ENCODE measurements at regions of chr22 and their contacts with region 1.

Region 1: DNA sequence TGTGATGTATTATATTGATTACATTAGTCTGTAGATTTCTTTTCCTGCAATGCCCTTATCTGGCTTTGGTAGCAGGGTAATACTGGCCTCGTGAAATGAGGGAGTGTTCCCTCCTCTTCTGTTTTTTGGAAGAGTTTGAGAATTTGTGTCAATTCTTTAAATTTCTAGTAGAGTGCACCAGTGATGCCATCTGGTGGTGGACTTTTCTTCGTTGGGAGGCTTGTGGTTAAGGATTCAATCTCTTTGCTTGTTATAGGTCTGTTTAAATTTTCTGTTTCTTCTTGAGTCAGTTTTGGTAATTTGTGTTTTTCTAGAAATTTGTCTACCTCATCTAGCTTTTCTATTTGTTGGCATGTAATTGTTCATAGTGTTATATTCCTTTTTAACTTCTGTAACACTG is 18.9 kb downstream of the SHANK3 start:
- H3K4me3 ChIP-seq: no peak overlapping the region
- H3K27ac ChIP-seq: no peak overlapping the region
- H3K4me1 ChIP-seq: no peaks in the 10 kb centered on the region
- CTCF ChIP-seq: 0 out of 2 replicates have a peak, but pooled peaks have one; percentile 40

Region 2: DNA sequence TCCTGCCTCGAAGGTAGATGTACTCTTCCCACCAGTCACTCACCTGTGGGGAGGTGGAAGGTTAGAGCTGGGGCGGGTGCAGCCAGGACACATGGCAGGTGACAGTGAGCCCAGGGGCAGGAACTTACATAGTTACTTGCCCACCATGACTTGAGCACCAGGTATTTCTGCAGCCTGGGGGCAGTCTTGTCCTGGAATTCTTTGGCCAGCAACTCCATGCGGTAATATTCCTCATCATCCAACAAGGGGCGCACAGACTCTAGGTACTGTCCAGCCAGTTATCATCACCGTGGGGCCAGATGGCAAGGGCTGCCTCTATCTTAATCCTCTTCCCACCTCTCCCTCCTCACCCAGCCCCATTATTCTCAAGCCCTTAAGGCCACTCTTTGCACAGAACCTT is 115.5 kb before region 1 on chr22:
- CTCF ChIA-PET with region 1: interaction called, 20 read pairs
- POLR2A ChIA-PET with region 1: no interaction called
- H3K4me3 ChIP-seq: no peak overlapping the region
- H3K27ac ChIP-seq: no peak overlapping the region
- H3K4me1 ChIP-seq: no peaks in the 10 kb centered on the region
- CTCF ChIP-seq: peak; percentile 90

Measured in HEK293 (cell line).